PC-9 (cell line): ENCODE measurements at regions of chr4 and their contacts with region 1.

Region 1: GRCh38 chr4:114287079-114287696 is 307.7 kb upstream of the ARSJ start:
- DNase-seq: no peak
- H3K4me3 ChIP-seq: no peak overlapping the region
- H3K27ac ChIP-seq: no peak overlapping the region
- H3K4me1 ChIP-seq: no peaks in the 10 kb centered on the region
- H3K27me3 ChIP-seq: no peaks in the 10 kb centered on the region
- CTCF ChIP-seq: no peak

Region 2: DNA sequence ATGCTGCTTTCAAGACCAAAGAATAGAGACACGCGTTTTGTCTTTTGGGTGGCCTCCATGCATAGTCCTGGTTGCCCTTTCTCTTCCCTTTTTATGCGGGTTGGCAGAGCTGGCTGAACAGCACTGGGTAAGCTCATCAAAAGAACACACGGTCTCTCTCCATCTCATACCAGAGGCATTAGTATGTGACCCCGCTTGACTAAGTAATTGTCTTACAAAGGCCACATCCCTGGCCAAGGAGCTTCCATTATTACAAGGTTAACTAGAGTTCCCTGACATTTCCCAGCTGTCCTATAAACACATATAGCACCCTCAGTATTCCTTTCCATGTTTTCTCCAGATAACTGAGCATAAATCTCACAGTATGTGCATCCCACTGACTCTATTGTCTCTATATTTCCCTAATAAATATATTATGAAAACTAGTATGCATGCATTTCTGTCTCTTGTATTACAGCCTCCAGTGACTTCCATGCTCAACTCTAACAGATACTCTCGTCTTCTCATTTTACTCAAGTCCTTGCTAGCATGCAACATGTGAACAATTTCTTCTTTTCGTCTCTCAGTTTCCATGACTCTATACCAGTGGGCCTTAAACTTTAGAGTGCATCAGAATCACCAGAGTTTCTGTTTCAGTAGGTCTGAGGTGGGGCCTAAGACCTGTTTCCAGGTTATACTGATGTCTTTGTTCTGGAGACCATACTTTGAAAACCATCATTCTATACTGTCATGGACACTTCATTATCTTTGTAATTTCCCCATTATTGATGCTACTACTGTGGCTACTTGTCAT is 60.0 kb before region 1 on chr4:
- CTCF ChIA-PET with region 1: no interaction called
- POLR2A ChIA-PET with region 1: interaction called, 10 read pairs
- intact Hi-C with region 1: no loop called
- DNase-seq: no peak
- H3K4me3 ChIP-seq: no peak overlapping the region
- H3K27ac ChIP-seq: no peak overlapping the region
- H3K4me1 ChIP-seq: no peaks in the 10 kb centered on the region
- H3K27me3 ChIP-seq: no peaks in the 10 kb centered on the region
- CTCF ChIP-seq: no peak